ENCODE measurements at regions of chr17 and their contacts with region 1.

Region 1: GRCh38 chr17:63406689-63407330 is 39.3 kb downstream of the CYB561 start:
- DNase-seq: no peak
- ATAC-seq: peak; percentile 91

Region 2: GRCh38 chr17:62671583-62672312 is 735.1 kb before region 1 on chr17:
- intact Hi-C with region 1: loop called (anchors 10 kb)
- DNase-seq: no peak
- ATAC-seq: no peak

Region 3: DNA sequence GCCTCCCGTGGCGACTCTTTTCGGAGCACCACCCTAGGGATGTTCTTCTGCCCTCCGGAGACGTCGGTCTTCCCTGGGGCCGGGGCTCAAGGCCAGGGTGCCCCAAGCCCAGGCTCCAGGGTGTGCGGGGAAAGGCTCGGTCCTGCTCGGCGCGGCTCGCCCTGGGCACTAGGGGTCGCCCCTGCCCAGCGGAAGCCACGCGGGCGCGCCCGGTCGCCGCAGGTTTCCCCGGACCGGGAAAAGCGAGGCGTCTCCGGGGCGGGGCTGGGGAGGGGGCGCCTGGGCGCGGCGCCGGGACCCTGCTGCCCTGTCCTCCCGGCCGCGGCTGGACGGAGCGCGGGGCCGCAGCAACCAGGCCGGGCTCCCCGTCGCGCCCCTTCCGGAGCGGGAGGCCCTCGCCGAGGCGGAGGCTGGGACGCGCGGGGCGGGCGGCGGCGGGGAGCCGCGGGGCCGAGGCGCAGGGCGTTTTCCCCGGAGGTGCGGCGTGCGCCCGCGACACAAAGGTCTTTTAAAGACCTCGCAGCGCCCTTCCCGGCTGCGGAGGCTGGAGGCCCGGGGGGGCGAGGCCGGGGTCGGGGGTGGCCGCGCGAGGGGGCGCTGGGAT is 702.9 kb before region 1 on chr17:
- intact Hi-C with region 1: loop called (anchors 10 kb)
- DNase-seq: peak; percentile 86
- ATAC-seq: peak; percentile 96

Measured in Right ventricle myocardium superior (tissue), 1 donor.